Right ventricle myocardium superior (tissue), 1 donor: ENCODE measurements at regions of chr16 and their contacts with region 1.

Region 1: GRCh38 chr16:28846080-28846932 is at the start of gene TUFM:
- DNase-seq: peak; percentile 98
- ATAC-seq: peak; percentile 98
- total RNA-seq, gene TUFM: 253 TPM

Region 2: GRCh38 chr16:28863929-28864793 is 17.9 kb after region 1 on chr16:
- intact Hi-C with region 1: loop called (anchors 2 kb)
- DNase-seq: peak; percentile 58
- ATAC-seq: peak; percentile 4